ENCODE measurements at regions of chr2 and their contacts with region 1.

Region 1: DNA sequence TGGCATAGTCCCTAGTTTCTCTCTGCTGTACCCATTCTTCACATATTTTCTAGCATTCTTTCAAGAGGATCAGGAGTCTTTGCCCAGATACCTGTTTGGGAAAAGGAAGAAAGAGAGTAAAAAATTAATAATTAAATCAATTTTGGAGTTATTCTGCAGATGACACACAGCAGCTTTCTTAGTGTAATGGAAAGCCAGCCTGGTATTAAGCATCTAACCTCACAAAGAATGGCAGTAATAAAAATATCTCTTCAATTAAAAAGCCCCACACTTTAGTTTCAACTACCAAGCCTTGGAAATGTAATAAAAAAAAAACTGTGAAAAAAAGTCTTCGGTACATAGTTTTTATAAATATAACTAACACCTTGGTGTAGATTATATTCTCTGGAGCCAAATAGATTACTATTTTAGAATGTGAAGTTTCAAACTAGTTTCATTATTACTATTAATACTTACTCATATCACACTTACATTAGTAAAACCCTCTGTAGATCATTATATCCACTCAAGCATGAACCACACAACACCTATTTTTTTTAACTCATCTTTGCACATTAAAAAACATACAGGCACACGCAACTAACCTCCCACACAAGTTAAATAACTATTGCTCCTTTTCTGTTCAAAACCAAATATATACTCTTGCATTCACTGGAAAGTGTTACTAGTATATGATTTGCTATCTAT is 90.9 kb downstream of the GPD2 start:
- DNase-seq: no peak
- H3K4me3 ChIP-seq: no peak overlapping the region
- CTCF ChIP-seq: no peak
- POLR2A ChIP-seq: no peak

Region 2: GRCh38 chr2:157036715-157037114 is 509.6 kb after region 1 on chr2:
- intact Hi-C with region 1: loop called (anchors 5 kb)
- DNase-seq: no peak
- H3K4me3 ChIP-seq: no peak overlapping the region
- CTCF ChIP-seq: no peak
- POLR2A ChIP-seq: no peak

Measured in lower leg skin (tissue), 4 donors.